AG04450 (cell line): ENCODE measurements at regions of chr9 and their contacts with region 1.

Region 1: DNA sequence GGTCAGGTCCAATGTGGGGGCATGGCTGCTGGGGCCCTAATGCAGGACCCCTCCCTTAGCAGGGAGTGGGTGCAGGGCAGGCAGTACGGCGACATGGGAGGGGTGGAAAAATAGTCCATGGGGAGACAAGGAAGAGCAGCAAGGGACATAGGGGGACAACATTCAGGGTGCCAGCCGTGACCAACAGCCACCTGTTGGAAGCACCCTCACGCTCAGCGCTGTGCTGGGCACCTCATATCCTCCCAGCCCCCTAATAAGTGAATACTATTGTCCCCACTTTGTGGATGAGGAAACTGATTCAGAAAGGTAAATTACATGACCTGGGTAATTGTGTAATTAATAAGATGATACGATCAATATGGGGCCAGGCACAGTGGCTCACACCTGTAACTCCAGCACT is 3.0 kb upstream of the FIBCD1 start:
- DNase-seq: no peak
- H3K4me3 ChIP-seq: no peak overlapping the region
- H3K27ac ChIP-seq: no peak overlapping the region
- H3K27me3 ChIP-seq: peaks cover 40% of the 10 kb centered on the region
- CTCF ChIP-seq: no peak

Region 2: GRCh38 chr9:130972322-130973168 is 30.5 kb after region 1 on chr9:
- CTCF ChIA-PET with region 1: interaction called, 3 read pairs
- POLR2A ChIA-PET with region 1: interaction called, 10 read pairs
- DNase-seq: no peak
- H3K4me3 ChIP-seq: no peak overlapping the region
- H3K27ac ChIP-seq: no peak overlapping the region
- H3K27me3 ChIP-seq: peaks cover 37% of the 10 kb centered on the region
- CTCF ChIP-seq: no peak